A549 (cell line): ENCODE measurements at regions of chr12 and their contacts with region 1.

Region 1: DNA sequence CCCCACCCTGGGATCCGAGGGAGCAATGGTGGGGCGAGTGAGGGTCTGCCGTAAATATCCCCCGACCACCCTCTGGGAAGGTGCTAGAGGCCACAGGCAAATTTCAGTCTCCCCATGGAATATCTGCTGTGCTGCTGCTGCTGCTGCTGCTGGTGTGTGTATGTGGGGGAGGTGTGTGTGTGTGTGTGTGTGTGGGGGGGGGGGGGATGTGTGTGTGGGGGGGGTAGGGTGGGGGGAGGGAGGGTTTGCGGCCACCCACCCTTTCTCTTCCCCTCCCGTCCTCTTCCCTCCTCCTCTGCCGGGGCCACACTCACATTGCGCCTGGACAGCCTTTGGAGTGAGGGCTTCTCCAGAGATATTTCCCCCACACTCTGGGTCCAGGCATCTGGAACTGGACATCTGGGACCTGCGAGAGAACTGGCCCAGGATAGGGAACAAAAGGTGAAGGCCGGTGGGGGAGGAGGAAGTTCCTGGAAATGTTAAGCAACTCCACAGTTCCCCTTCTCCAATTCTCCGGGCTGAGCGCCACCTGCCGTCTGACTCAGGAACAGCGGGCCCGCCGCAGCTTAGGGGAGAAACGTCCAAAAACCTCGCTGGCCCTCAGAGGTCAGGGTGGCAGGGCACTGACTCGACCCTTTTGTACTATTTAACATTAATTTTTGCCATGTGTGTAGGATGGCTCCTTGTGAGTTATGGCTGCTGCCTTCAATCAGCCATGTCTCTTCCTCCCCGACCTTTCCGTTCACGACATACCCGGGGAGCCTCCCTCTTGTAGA is at the start of gene C1RL:
- DNase-seq: peak; percentile 73 to 90
- ATAC-seq: peak; percentile 67 to 71
- H3K4me3 ChIP-seq: peak within 1 kb of the TSS; percentile 55
- H3K27ac ChIP-seq: peak within 1 kb of the TSS; percentile 96 to 97
- H3K4me1 ChIP-seq: peaks cover 30% of the 10 kb centered on the region
- CTCF ChIP-seq: peak; percentile 88
- EP300 ChIP-seq: 0 out of 5 replicates have a peak, but pooled peaks of 1 of the 2 experiments have one; percentile 24
- POLR2A ChIP-seq: peak; percentile 41
- RAD21 ChIP-seq: peak; percentile 81
- polyA plus RNA-seq, gene C1RL: 30.4 and 32.4 TPM in 2 replicates

Region 2: DNA sequence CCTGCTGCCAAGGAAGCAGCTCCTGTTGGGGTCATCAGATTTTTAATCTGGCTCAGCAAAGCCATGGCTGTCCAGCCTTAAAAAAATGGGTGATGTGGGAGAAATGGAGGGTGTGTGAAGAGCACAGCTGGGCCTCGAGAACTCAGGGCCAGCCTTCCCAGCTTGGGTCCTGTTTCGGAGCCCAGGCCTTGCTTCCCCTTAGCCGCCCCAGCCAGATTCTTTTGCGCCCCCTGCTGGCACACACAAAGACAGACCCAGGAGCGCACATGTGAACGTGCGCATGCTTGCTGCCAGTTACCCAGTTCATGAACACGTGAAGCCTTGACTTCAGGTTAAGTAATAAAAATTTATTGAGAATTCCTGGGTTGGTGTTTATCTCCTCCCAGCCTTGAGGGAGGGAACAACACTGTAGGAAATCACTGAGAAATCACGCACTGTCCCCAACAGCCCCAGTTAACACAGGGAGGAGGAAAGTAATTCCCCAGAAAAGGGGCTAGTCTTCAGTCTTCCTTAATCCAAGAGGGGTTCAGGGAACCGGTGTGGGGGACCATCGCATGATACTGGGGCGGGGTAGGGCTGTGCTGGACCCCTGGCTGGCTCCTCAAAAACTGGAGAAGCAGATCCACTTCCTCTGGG is 143.8 kb before region 1 on chr12:
- CTCF ChIA-PET with region 1: interaction called, 16 read pairs
- POLR2A ChIA-PET with region 1: no interaction called
- DNase-seq: peak; percentile 92 to 93
- ATAC-seq: peak; percentile 64 to 77
- H3K4me3 ChIP-seq: no peak overlapping the region
- H3K27ac ChIP-seq: peak overlapping the region; percentile 50 to 99; a peak in 5 of 6 replicates
- H3K4me1 ChIP-seq: peaks cover 51% of the 10 kb centered on the region
- CTCF ChIP-seq: peak; percentile 89
- EP300 ChIP-seq: no peak
- POLR2A ChIP-seq: no peak
- RAD21 ChIP-seq: peak; percentile 59 to 67; a peak in 4 of 5 replicates

Region 3: DNA sequence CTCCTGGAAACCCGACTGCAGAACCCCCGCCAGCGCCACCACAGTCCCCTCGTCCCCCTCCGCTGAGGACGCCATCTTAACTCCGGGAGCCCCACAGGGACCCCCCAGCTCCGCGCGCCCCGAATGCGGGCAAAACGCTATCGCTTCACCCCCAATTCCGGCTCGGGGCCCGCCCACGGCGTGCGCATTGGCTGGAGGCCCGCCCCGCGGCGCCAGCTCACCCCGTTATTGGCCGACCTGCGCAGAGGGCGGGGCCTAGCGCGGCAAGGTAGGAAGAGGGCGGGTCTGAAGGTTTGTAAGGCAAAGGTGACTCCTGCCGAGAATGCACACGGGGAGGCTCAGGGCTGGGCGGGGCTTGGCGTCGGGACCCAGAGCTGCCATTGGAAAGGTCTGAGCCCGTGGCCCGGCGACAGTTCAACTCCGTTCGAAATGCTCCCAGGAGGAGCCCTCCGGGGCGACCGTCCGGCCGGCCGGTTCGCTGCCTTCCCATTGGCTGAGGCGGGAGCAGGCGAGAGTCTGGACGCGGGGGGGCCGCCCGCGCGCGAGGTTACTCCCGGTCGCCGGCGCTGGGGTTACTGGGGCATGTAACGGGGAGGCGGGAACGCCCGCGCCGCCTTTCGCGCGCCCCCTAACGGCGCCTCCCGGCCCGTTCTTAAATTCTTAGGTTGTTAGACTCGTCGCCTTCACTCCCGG is 90.5 kb before region 1 on chr12 and contains the start of gene LPCAT3:
- CTCF ChIA-PET with region 1: interaction called, 22 read pairs
- POLR2A ChIA-PET with region 1: interaction called, 8 read pairs
- DNase-seq: peak; percentile 94 to 97
- ATAC-seq: peak; percentile 93 to 95
- H3K4me3 ChIP-seq: peak within 1 kb of the TSS; percentile 72
- H3K27ac ChIP-seq: peak within 1 kb of the TSS; percentile 88 to 91
- H3K4me1 ChIP-seq: peaks cover 26% of the 10 kb centered on the region
- CTCF ChIP-seq: peak; percentile 89
- EP300 ChIP-seq: no peak
- POLR2A ChIP-seq: peak; percentile 72
- RAD21 ChIP-seq: peak; percentile 57 to 70
- polyA plus RNA-seq, gene LPCAT3: 52.0 and 53.4 TPM in 2 replicates

Region 4: DNA sequence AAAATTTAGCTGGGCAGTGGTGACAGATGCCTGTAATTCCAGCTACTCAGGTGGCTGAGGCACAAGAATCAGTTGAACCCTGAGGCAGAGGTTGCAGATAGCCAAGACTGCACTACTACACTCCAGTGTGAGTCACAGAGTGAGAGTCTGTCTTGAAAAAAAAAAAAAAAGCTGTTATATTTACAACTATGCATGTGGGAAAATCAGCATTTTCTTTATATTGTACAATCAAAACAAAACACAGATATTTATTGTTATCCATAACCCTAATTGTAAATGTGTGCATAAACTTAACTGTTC is 29.2 kb before region 1 on chr12:
- CTCF ChIA-PET with region 1: interaction called, 84 read pairs
- POLR2A ChIA-PET with region 1: interaction called, 27 read pairs
- DNase-seq: peak in 1 of 2 experiments; percentile 52
- ATAC-seq: peak; percentile 79 to 84
- H3K4me3 ChIP-seq: no peak overlapping the region
- H3K27ac ChIP-seq: peak overlapping the region; percentile 91
- H3K4me1 ChIP-seq: peaks cover 26% of the 10 kb centered on the region
- CTCF ChIP-seq: no peak
- EP300 ChIP-seq: no peak
- POLR2A ChIP-seq: no peak
- RAD21 ChIP-seq: no peak

Region 5: GRCh38 chr12:7122811-7123769 is 14.1 kb after region 1 on chr12:
- CTCF ChIA-PET with region 1: interaction called, 35 read pairs
- POLR2A ChIA-PET with region 1: interaction called, 3 read pairs
- DNase-seq: no peak
- ATAC-seq: no peak
- H3K4me3 ChIP-seq: no peak overlapping the region
- H3K27ac ChIP-seq: no peak overlapping the region
- H3K4me1 ChIP-seq: no peaks in the 10 kb centered on the region
- CTCF ChIP-seq: no peak
- EP300 ChIP-seq: no peak
- POLR2A ChIP-seq: no peak
- RAD21 ChIP-seq: no peak

Region 6: DNA sequence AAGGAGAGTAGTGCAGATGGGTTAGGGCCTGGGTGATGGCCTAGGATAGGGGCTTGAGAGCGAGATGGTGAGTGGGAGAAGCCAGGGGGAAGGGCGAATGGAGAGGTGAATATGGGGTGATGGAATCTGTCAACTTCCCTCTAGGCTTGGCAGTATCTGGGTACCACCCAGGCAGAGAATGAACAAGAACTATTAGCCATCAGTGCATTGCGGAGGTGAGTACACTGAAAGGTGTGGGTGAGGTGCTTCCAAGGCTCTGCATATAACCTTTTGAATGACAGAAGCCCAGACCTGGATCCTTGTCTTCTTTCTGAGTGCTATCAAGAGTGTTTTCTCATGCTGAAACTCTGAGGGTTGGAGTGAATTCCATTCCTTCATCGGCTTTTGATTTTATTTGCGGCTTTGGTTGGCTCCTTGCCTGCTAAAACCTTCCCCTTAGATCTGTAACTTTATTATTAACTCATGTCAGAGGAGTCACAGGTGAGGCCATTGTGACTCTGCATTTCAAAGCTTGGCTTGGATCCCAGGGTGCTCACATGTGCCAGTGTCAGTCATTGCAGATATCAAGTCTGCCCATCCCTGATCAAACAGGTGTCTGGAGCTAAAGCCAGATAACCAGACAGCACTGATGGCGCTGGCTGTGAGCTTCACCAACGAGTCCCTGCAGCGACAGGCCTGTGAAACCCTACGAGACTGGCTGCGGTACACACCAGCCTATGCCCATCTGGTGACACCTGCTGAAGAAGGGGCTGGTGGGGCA is 99.1 kb after region 1 on chr12:
- CTCF ChIA-PET with region 1: no interaction called
- POLR2A ChIA-PET with region 1: no interaction called
- DNase-seq: no peak
- ATAC-seq: no peak
- H3K4me3 ChIP-seq: no peak overlapping the region
- H3K27ac ChIP-seq: no peak overlapping the region
- H3K4me1 ChIP-seq: no peaks in the 10 kb centered on the region
- CTCF ChIP-seq: no peak
- EP300 ChIP-seq: no peak
- POLR2A ChIP-seq: no peak
- RAD21 ChIP-seq: no peak

Region 7: DNA sequence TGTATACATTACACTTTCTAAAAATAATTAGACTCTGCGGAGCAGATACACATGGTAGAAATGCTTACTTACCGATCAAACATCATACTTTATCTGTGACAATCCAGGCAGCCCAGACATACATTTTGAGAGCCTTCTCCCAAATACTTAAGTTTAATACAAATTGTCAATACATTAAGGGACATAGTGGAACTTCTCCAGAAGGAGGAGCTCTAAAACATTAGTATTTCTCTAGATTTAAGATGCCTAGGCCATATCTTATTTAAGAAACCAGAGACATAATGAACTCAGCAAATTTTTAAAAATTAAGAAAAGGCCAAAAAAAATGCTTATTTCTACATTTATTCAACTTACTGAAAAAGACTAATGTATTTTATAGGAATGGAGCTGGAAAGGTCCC is 210.9 kb after region 1 on chr12:
- CTCF ChIA-PET with region 1: no interaction called
- POLR2A ChIA-PET with region 1: no interaction called
- DNase-seq: no peak
- ATAC-seq: no peak
- H3K4me3 ChIP-seq: no peak overlapping the region
- H3K27ac ChIP-seq: no peak overlapping the region
- H3K4me1 ChIP-seq: no peaks in the 10 kb centered on the region
- CTCF ChIP-seq: no peak
- EP300 ChIP-seq: no peak
- POLR2A ChIP-seq: no peak
- RAD21 ChIP-seq: no peak